Right ventricle myocardium inferior (tissue), 1 donor: ENCODE measurements at regions of chr1 and their contacts with region 1.

Region 1: GRCh38 chr1:204989266-204990058 is 53.5 kb upstream of the CNTN2 start:
- DNase-seq: peak; percentile 88
- ATAC-seq: peak; percentile 75

Region 2: DNA sequence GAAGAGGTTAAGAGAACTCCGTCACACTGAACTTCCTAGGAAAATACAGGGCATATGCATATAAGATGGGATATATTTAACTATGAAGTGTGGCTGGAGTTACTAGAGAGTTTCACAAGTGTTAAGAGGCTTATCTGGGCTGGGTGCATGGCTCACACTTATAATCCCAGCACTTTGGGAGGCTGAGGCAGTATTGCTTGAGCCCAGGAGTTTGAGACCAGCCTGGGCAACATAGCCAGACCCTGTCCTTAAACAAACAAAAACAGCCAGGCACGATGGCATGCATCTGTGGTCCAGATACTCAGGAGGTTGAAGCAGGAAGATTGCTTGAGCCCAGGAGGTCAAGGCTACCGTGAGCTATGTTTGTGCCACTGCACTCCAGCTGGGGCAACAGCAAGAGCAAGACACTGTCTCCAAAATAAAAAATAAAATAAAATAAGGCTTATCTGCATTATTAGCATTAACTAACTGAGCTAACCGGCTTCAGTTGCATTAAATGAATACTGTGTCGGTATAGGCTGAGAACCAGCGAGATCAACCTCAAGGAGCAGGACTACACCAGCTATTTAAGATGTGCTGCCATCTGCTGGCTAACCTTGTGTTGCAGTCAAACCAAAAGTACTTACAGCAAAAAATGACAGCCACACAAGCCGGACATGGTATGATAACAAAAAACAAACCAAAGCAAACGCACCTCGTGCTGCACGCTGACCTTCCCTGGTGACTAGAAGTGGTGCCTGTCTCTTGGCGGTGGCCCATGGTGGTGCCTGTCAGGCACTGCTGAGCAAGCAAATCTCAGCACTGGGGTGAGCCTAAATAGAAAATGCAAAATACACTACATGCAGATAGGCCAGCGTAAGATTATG is 152.0 kb after region 1 on chr1:
- intact Hi-C with region 1: loop called (anchors 2 kb)
- DNase-seq: no peak
- ATAC-seq: peak; percentile 78